GM12878 (cell line): ENCODE measurements at regions of chr11 and their contacts with region 1.

Region 1: GRCh38 chr11:67265633-67266423 is 445 bp upstream of the GRK2 start:
- DNase-seq: no peak
- ATAC-seq: peak; percentile 54
- H3K4me3 ChIP-seq: no peak overlapping the region
- H3K27ac ChIP-seq: 0 out of 2 replicates have a peak overlapping the region, but pooled peaks have one; percentile 33
- H3K4me1 ChIP-seq: peaks cover 36% of the 10 kb centered on the region
- H3K27me3 ChIP-seq: no peaks in the 10 kb centered on the region
- CTCF ChIP-seq: peak; percentile 63 to 84 (median 70); a peak in 5 of 6 replicates
- EP300 ChIP-seq: no peak
- POLR2A ChIP-seq: no peak
- RAD21 ChIP-seq: peak; percentile 80

Region 2: GRCh38 chr11:67146516-67147226 is 119.2 kb before region 1 on chr11:
- CTCF ChIA-PET with region 1: no interaction called
- POLR2A ChIA-PET with region 1: no interaction called
- RAD21 ChIA-PET with region 1: no interaction called
- SMC1A ChIA-PET with region 1: no interaction called
- in situ Hi-C with region 1: no loop called
- intact Hi-C with region 1: no loop called
- DNase-seq: no peak
- ATAC-seq: no peak
- H3K4me3 ChIP-seq: no peak overlapping the region
- H3K27ac ChIP-seq: no peak overlapping the region
- H3K4me1 ChIP-seq: no peaks in the 10 kb centered on the region
- H3K27me3 ChIP-seq: no peaks in the 10 kb centered on the region
- CTCF ChIP-seq: no peak
- EP300 ChIP-seq: no peak
- POLR2A ChIP-seq: no peak
- RAD21 ChIP-seq: no peak

Region 3: GRCh38 chr11:67233584-67234190 is 32.1 kb before region 1 on chr11:
- CTCF ChIA-PET with region 1: interaction called, 30 read pairs
- POLR2A ChIA-PET with region 1: no interaction called
- RAD21 ChIA-PET with region 1: interaction called, 4 read pairs
- SMC1A ChIA-PET with region 1: no interaction called
- in situ Hi-C with region 1: no loop called
- intact Hi-C with region 1: no loop called
- DNase-seq: no peak
- ATAC-seq: peak; percentile 79
- H3K4me3 ChIP-seq: no peak overlapping the region
- H3K27ac ChIP-seq: no peak overlapping the region
- H3K4me1 ChIP-seq: no peaks in the 10 kb centered on the region; the same call in 1 of the 2 replicates
- H3K27me3 ChIP-seq: no peaks in the 10 kb centered on the region
- CTCF ChIP-seq: no peak
- EP300 ChIP-seq: no peak
- POLR2A ChIP-seq: no peak
- RAD21 ChIP-seq: no peak

Region 4: GRCh38 chr11:67252831-67253239 is 13.0 kb before region 1 on chr11:
- CTCF ChIA-PET with region 1: interaction called, 30 read pairs
- POLR2A ChIA-PET with region 1: interaction called, 5 read pairs
- RAD21 ChIA-PET with region 1: no interaction called
- SMC1A ChIA-PET with region 1: interaction called, 12 read pairs
- in situ Hi-C with region 1: no loop called
- intact Hi-C with region 1: no loop called
- DNase-seq: no peak
- ATAC-seq: peak; percentile 74
- H3K4me3 ChIP-seq: no peak overlapping the region
- H3K27ac ChIP-seq: no peak overlapping the region
- H3K4me1 ChIP-seq: no peaks in the 10 kb centered on the region
- H3K27me3 ChIP-seq: no peaks in the 10 kb centered on the region
- CTCF ChIP-seq: peak; percentile 32 to 44 (median 35); a peak in 4 of 6 replicates
- EP300 ChIP-seq: no peak
- POLR2A ChIP-seq: peak; percentile 46; the same call in 1 of the 2 replicates
- RAD21 ChIP-seq: peak; percentile 38

Region 5: GRCh38 chr11:67288452-67289225 is 22.8 kb after region 1 on chr11:
- CTCF ChIA-PET with region 1: interaction called, 18 read pairs
- POLR2A ChIA-PET with region 1: interaction called, 46 read pairs
- RAD21 ChIA-PET with region 1: interaction called, 11 read pairs
- SMC1A ChIA-PET with region 1: interaction called, 35 read pairs
- in situ Hi-C with region 1: no loop called
- intact Hi-C with region 1: loop called (anchors 1 kb)
- DNase-seq: peak; percentile 61
- ATAC-seq: peak; percentile 88
- H3K4me3 ChIP-seq: peak overlapping the region; percentile 97
- H3K27ac ChIP-seq: peak overlapping the region; percentile 99
- H3K4me1 ChIP-seq: peaks cover 26% of the 10 kb centered on the region
- H3K27me3 ChIP-seq: no peaks in the 10 kb centered on the region
- CTCF ChIP-seq: peak in 2 of 3 experiments; percentile 24 to 75; a peak in 4 of 6 replicates
- EP300 ChIP-seq: peak; percentile 17 to 67; a peak in 1 of 4 replicates
- POLR2A ChIP-seq: peak; percentile 93
- RAD21 ChIP-seq: peak; percentile 68

Region 6: DNA sequence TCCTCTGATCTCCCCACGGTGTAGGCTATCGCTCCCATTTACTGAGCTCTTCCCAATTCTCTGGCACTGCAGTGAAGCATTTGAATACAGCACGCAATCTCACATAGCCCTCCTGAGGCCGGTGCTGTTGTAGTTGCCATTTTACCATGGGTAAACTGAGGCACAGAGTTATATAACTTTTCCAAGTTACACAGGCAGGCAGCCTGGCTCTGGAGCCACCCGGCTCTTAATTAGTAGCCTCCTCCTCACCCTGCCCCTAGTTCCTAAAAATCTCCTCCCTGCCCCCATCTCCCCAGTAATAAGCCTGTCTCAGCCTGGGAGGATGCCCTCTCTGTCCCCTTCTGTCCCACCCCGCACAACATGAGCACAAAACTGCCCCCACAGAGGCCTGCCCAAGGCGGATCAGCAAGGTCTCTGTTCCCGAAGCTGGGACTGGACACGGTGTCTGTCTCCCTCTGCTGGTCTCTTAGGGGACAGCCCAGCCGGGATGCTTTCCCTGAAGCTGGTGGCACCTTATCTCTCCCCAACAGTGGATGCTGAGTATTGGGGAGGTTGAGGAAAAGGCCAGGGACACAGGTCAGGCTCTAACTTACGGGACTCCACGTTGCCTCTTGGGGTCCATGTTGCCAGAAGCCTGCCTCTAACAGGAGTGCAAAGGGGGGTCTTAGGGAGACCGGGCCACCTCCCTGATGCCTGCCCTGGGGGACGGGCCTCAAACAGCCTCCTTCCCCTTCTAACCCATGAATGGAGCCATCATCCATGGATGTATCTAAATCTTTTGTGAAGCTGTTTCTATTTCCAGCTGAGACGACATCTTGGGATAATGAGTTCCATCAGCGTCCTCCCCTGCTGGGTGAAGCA is 116.7 kb after region 1 on chr11:
- CTCF ChIA-PET with region 1: interaction called, 63 read pairs
- POLR2A ChIA-PET with region 1: interaction called, 3 read pairs
- RAD21 ChIA-PET with region 1: interaction called, 33 read pairs
- SMC1A ChIA-PET with region 1: interaction called, 36 read pairs
- in situ Hi-C with region 1: loop called (anchors 5 kb)
- intact Hi-C with region 1: loop called (anchors 1 kb)
- DNase-seq: no peak
- ATAC-seq: peak; percentile 93
- H3K4me3 ChIP-seq: no peak overlapping the region
- H3K27ac ChIP-seq: no peak overlapping the region
- H3K4me1 ChIP-seq: peaks cover 19% of the 10 kb centered on the region
- H3K27me3 ChIP-seq: peaks cover 0 to 3% of the 10 kb centered on the region in 2 experiments; a peak in 2 of 4 replicates
- CTCF ChIP-seq: peak; percentile 99; a peak in 5 of 6 replicates
- EP300 ChIP-seq: no peak
- POLR2A ChIP-seq: no peak
- RAD21 ChIP-seq: peak; percentile 99

Region 7: DNA sequence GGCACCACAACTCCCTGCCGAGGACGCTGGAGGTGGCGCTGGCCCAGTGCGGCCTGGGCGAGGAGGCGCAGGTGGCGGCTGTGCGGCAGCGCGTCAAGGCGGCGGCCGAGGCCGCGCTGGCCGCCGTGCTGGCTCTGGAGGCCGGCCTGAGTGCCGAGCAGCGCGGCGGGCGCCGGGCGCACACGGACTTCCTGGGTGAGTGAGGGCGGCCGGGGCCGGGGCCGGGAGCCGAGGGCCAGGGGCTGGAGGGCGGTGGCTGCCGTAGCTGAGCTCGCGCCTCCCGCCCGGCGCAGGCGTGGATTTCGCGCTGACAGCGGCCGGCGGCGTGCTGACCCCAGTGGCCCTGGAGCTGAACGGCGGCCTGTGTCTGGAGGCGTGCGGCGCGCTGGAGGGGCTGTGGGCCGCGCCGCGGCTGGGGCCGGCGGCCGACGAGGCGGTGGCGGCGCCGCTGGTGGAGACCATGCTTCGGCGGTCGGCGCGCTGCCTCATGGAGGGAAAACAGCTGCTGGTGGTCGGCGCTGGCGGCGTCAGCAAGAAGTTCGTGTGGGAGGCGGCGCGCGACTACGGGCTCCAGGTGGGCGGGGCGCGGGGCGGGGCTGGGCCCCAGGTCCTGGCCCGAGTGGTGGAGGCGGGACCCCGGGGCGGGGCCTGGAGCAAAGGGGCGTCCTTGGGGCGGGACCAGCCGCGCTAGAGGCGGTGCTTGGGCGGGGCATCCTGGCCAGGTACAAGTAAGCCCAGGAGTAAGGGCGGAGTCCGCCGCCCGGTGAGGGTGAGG is 155.0 kb after region 1 on chr11:
- CTCF ChIA-PET with region 1: no interaction called
- POLR2A ChIA-PET with region 1: no interaction called
- RAD21 ChIA-PET with region 1: no interaction called
- SMC1A ChIA-PET with region 1: no interaction called
- in situ Hi-C with region 1: no loop called
- intact Hi-C with region 1: no loop called
- DNase-seq: no peak
- ATAC-seq: peak; percentile 94
- H3K4me3 ChIP-seq: peak overlapping the region; percentile 71
- H3K27ac ChIP-seq: no peak overlapping the region; the same call in 1 of the 2 replicates
- H3K4me1 ChIP-seq: peaks cover 2% of the 10 kb centered on the region; the same call in 1 of the 2 replicates
- H3K27me3 ChIP-seq: peaks cover 0 to 3% of the 10 kb centered on the region in 2 experiments; a peak in 2 of 4 replicates
- CTCF ChIP-seq: no peak
- EP300 ChIP-seq: no peak
- POLR2A ChIP-seq: peak; percentile 77
- RAD21 ChIP-seq: no peak

Region 8: GRCh38 chr11:67572747-67573419 is 307.1 kb after region 1 on chr11:
- CTCF ChIA-PET with region 1: no interaction called
- POLR2A ChIA-PET with region 1: no interaction called
- RAD21 ChIA-PET with region 1: no interaction called
- SMC1A ChIA-PET with region 1: no interaction called
- in situ Hi-C with region 1: no loop called
- intact Hi-C with region 1: no loop called
- DNase-seq: no peak
- ATAC-seq: peak; percentile 77
- H3K4me3 ChIP-seq: no peak overlapping the region
- H3K27ac ChIP-seq: no peak overlapping the region
- H3K4me1 ChIP-seq: peaks cover 5% of the 10 kb centered on the region
- H3K27me3 ChIP-seq: no peaks in the 10 kb centered on the region; a peak in 1 of 4 replicates
- CTCF ChIP-seq: peak; percentile 56 to 85 (median 62)
- EP300 ChIP-seq: no peak
- POLR2A ChIP-seq: no peak
- RAD21 ChIP-seq: peak; percentile 73